ENCODE measurements at regions of chr15 and their contacts with region 1.

Region 1: DNA sequence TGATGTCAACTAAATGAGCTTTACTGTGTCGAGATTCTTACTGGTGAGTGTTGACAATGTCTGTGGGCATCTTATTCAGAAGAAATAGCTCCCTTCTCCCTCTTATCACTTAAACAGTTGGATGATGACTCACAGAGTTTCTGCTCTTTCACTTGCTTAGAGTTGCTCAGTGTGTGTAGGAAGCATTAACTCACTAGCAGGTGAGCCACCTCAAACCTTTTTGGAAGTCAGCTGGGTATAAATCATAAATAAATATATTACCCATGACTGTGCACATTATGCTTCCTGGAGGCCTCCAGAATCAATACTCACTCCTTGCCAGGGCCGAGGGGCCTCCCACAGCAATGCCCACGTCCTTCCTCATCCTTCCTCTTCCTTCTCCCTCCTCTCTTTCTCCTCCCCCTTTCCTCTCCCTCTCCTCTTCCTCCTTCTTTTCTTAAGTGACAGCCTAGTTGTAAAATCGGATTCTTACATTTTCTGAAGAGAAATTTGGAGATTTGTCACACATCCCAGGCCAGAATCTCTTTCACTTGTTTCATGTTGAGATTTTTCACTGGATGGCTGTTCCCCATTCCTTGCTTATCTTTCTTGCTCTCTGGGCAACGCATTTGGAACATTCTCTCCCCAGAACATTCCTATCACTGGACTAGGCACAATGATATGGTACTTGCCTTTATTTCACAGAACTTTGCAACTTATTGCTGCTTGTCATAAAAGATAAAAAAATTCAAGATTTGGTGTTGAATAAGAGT is 17.5 kb downstream of the SHC4 start:
- DNase-seq: peak; percentile 85
- H3K4me3 ChIP-seq: no peak overlapping the region
- H3K27ac ChIP-seq: peak overlapping the region; percentile 50
- H3K4me1 ChIP-seq: peaks cover 14% of the 10 kb centered on the region
- H3K27me3 ChIP-seq: no peaks in the 10 kb centered on the region
- CTCF ChIP-seq: no peak

Region 2: GRCh38 chr15:48871471-48871870 is 74.8 kb before region 1 on chr15:
- dilution Hi-C with region 1: loop called (anchors 5 kb)
- DNase-seq: no peak
- H3K4me3 ChIP-seq: no peak overlapping the region
- H3K27ac ChIP-seq: no peak overlapping the region
- H3K4me1 ChIP-seq: peaks cover 15% of the 10 kb centered on the region
- H3K27me3 ChIP-seq: no peaks in the 10 kb centered on the region
- CTCF ChIP-seq: no peak

Region 3: GRCh38 chr15:48984811-48985352 is 38.6 kb after region 1 on chr15:
- dilution Hi-C with region 1: no loop called
- DNase-seq: no peak
- H3K4me3 ChIP-seq: no peak overlapping the region
- H3K27ac ChIP-seq: no peak overlapping the region
- H3K4me1 ChIP-seq: no peaks in the 10 kb centered on the region
- H3K27me3 ChIP-seq: no peaks in the 10 kb centered on the region
- CTCF ChIP-seq: no peak

Measured in keratinocyte (primary cell).